GM10248 (cell line): ENCODE measurements at regions of chr11 and their contacts with region 1.

Region 1: GRCh38 chr11:90204832-90205646 is 17.8 kb downstream of the CHORDC1 start:
- DNase-seq: peak; percentile 45
- CTCF ChIP-seq: peak; percentile 82

Region 2: GRCh38 chr11:90134478-90135003 is 70.5 kb before region 1 on chr11 and contains the start of gene NAALAD2:
- CTCF ChIA-PET with region 1: no interaction called
- POLR2A ChIA-PET with region 1: no interaction called
- DNase-seq: peak; percentile 10
- CTCF ChIP-seq: no peak

Region 3: GRCh38 chr11:90187839-90188238 is 17.2 kb before region 1 on chr11:
- CTCF ChIA-PET with region 1: interaction called, 38 read pairs
- POLR2A ChIA-PET with region 1: no interaction called
- DNase-seq: no peak
- CTCF ChIP-seq: no peak

Region 4: DNA sequence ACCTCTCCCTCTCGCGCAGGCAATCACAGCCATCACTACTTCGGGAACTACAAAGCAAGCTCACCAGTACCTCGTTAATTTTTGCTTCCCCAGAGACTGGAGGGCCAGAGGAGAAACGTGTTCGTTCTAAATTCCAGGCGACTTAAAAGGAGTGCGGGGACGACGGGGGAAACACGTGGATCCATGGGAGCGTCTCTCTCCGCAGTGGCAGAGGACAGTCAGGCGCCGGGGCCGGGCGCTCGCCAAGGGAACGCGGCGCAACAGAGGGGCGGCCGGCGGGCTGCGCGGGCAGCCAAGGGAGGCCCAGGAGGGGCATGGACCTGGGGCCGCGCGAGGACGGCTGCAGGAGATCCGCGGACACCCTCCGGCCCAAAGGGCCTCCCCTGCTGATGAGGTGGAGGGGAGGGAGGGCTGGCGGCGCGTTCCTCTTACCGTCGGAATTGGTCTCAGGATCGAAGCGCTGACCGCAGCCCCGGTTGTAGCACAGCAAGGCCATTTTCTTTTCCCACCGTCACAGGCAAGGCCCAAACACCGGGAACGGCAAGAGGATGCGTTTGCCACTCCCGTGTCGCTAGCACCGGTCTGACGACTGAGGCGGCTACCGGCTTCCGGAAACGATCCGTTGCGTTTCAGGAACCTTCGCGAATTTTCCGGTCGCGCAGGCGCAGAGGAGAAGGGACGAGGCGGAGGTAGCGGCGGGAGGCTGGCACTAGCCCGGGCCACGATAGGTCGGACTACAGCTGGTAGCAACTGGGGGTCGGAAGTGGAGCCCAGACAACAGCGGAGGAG is 17.6 kb after region 1 on chr11 and contains the start of gene CHORDC1:
- CTCF ChIA-PET with region 1: interaction called, 24 read pairs
- POLR2A ChIA-PET with region 1: no interaction called
- DNase-seq: peak; percentile 90
- CTCF ChIP-seq: no peak

Region 5: GRCh38 chr11:90235526-90235925 is 30.5 kb after region 1 on chr11:
- CTCF ChIA-PET with region 1: interaction called, 16 read pairs
- POLR2A ChIA-PET with region 1: no interaction called
- DNase-seq: no peak
- CTCF ChIP-seq: no peak